CD4-positive, alpha-beta T cell (primary cell): ENCODE measurements at regions of chr2 and their contacts with region 1.

Region 1: GRCh38 chr2:38377050-38377828 is at the start of gene ATL2:
- DNase-seq: peak; percentile 87 to 97 (median 91)
- ATAC-seq: peak; percentile 75
- H3K4me3 ChIP-seq: peak within 1 kb of the TSS; percentile 75
- H3K4me3 Mint-ChIP-seq: peak within 1 kb of the TSS; percentile 99
- H3K27ac ChIP-seq: peak within 1 kb of the TSS; percentile 59 to 75
- H3K27ac Mint-ChIP-seq: peak within 1 kb of the TSS; percentile 95
- H3K4me1 ChIP-seq: peaks cover 38% of the 10 kb centered on the region
- H3K4me1 Mint-ChIP-seq: peaks cover 83% of the 10 kb centered on the region
- H3K27me3 ChIP-seq: no peaks in the 10 kb centered on the region
- H3K27me3 Mint-ChIP-seq: no peaks in the 10 kb centered on the region
- CTCF ChIP-seq: no peak
- total RNA-seq, gene ATL2: 85.5 to 91.7 TPM

Region 2: DNA sequence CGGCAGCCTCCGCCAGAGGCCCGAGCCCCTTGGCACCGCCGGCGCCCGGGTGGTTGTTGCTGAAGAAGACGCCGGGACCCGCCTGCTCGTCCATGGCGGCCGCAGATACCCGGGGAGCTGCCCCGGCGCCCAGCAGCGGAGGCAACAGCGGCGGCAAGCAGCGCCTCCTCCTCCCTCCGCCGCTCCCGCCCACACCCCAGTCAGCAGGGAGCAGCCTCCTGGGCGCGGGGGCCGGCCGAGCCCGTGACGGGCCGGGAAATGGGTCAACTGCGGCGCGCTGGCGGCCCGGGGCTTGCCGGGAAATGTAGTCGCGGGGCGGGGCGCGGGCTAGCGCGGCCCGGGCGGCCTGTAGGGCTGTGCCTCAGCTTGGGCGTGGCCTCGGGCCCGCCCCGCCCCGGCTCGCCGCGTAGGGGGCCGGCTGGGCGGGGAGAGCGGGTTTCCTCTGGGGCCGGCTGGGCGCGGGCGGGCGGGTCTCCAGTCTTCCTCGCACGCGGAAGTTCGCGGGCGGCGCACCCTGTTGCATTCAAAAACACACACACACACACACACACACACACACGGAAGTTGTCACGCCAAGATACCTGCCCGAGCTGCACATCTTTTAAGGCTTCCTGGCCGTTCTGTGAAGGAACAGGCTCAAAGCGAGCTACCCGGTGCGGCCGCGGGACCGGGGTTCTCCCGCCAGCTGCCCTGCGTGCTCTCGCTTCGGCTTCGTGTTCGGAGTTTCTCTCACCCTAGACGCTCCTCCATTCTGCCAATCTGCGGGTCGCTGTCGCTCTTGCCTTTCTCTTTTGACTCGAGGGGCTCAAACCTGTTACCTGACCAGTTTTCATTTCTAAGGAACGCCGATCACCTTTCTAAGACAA is 1410.6 kb before region 1 on chr2 and contains the start of gene STRN:
- CTCF ChIA-PET with region 1: no interaction called
- POLR2A ChIA-PET with region 1: interaction called, 4 read pairs
- intact Hi-C with region 1: loop called in 1 of 2 experiments (anchors 10 kb)
- DNase-seq: peak; percentile 93 to 99 (median 98)
- ATAC-seq: peak; percentile 88
- H3K4me3 ChIP-seq: peak within 1 kb of the TSS; percentile 86
- H3K4me3 Mint-ChIP-seq: peak within 1 kb of the TSS; percentile 99
- H3K27ac ChIP-seq: peak within 1 kb of the TSS; percentile 89 to 90
- H3K27ac Mint-ChIP-seq: peak within 1 kb of the TSS; percentile 97
- H3K4me1 ChIP-seq: peaks cover 26% of the 10 kb centered on the region
- H3K4me1 Mint-ChIP-seq: peaks cover 58% of the 10 kb centered on the region
- H3K27me3 ChIP-seq: no peaks in the 10 kb centered on the region
- H3K27me3 Mint-ChIP-seq: no peaks in the 10 kb centered on the region
- CTCF ChIP-seq: no peak
- total RNA-seq, gene STRN: 20.4 to 20.8 TPM

Region 3: DNA sequence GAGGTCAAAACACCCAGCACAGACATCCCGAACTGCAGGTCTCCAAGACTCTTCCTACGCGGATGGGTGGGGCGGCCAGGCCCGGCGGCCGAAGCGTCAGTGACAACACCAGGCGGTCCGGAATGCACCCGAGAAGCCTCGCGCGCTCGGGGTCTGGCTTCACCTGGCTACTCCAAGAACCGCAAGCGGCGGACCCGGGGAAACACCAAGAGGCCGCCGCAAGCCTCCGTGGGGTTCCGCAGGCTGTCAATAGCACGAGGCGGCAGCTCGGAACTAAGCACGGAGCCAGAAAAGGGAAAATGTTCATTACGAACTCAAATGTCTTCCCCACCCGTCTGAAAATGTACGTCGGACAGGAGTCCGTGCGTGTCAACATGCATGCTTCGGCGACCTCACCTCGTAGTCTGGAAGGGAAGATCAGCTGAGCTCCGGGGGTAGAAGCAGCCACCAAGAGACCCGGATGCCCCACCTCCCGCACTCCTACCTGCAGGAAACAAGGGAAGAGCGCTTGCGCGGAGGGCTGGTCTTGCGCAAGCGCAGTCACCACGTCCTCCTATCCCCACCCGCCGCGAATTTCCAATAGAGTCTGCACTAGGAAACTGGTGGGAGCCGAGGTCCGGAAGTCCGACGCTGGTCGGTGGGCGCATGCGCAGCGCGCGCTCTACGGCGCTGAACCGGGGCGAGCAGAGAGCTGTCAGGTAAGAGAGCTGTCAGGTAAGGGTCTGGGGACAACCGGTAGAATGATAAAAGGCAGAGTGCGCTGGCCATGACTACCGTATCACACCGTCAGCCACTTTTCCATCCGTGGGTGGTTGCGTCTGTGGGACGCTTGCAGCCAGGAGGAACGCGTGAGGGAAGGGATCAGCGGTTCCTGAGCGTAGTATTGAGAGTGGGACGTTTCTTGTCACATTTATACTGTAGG is 1293.1 kb before region 1 on chr2 and contains the starts of genes GPATCH11 and HEATR5B:
- CTCF ChIA-PET with region 1: no interaction called
- POLR2A ChIA-PET with region 1: no interaction called
- intact Hi-C with region 1: loop called in 1 of 2 experiments (anchors 10 kb)
- DNase-seq: peak; percentile 80 to 98 (median 89)
- ATAC-seq: peak; percentile 84
- H3K4me3 ChIP-seq: peak within 1 kb of the TSS; percentile 94
- H3K4me3 Mint-ChIP-seq: no peak within 1 kb of the TSS
- H3K27ac ChIP-seq: peak within 1 kb of the TSS; percentile 77 to 82
- H3K27ac Mint-ChIP-seq: no peak within 1 kb of the TSS
- H3K4me1 ChIP-seq: peaks cover 42% of the 10 kb centered on the region
- H3K4me1 Mint-ChIP-seq: no peaks in the 10 kb centered on the region
- H3K27me3 ChIP-seq: no peaks in the 10 kb centered on the region
- H3K27me3 Mint-ChIP-seq: no peaks in the 10 kb centered on the region
- CTCF ChIP-seq: no peak
- total RNA-seq, gene GPATCH11: 4.0 to 4.1 TPM
- total RNA-seq, gene HEATR5B: 23.4 to 23.9 TPM

Region 4: DNA sequence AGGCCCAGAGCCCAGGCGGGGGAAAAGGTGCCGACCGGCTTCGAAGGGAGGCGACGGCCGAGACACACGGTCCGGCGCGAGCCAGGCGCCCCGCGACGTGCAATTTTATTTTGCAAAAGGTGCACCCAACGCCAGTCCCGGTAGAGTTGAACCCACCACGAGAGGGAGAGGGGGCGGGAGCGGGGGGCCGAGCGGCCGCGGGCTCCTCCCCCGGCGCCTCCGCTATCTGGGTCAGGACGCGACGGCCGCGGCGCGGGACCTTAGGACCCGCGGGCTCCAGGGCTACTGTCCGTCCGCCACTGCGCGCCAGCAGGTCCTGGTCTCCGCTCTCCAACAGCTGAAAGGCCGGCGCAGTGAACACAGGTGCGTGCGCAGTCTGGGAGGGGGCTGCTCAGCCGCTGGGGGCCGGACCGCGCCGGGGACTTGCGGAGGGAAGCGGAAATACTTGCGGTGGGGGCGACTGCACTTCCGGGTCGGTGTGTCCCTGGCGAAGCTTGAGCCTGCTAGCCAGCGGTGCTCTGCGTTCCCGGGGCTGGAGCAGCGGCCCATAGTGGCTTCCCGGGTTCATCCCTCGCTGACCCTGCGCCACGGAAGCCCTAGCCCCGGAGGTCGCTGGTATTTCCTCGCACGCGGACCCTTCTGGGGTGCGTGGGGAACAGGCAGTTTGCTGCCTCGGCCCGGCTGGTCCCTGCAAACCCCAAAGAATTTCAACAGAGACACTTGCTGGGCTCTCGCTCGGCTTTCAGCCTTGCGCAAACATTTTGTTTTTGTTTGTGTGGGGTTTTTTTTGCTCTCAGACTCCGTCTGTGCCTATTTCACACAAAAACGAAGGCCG is 452.0 kb before region 1 on chr2 and contains the start of gene RMDN2:
- CTCF ChIA-PET with region 1: no interaction called
- POLR2A ChIA-PET with region 1: interaction called, 3 read pairs
- intact Hi-C with region 1: loop called in 1 of 2 experiments (anchors 10 kb)
- DNase-seq: peak; percentile 48 to 86 (median 71)
- ATAC-seq: peak; percentile 83
- H3K4me3 ChIP-seq: peak within 1 kb of the TSS; percentile 82
- H3K4me3 Mint-ChIP-seq: peak within 1 kb of the TSS; percentile 93
- H3K27ac ChIP-seq: peak within 1 kb of the TSS; percentile 37 to 62
- H3K27ac Mint-ChIP-seq: peak within 1 kb of the TSS; percentile 79
- H3K4me1 ChIP-seq: peaks cover 6% of the 10 kb centered on the region
- H3K4me1 Mint-ChIP-seq: peaks cover 36% of the 10 kb centered on the region
- H3K27me3 ChIP-seq: no peaks in the 10 kb centered on the region
- H3K27me3 Mint-ChIP-seq: no peaks in the 10 kb centered on the region
- CTCF ChIP-seq: no peak
- total RNA-seq, gene RMDN2: 2.4 to 3.3 TPM

Region 5: DNA sequence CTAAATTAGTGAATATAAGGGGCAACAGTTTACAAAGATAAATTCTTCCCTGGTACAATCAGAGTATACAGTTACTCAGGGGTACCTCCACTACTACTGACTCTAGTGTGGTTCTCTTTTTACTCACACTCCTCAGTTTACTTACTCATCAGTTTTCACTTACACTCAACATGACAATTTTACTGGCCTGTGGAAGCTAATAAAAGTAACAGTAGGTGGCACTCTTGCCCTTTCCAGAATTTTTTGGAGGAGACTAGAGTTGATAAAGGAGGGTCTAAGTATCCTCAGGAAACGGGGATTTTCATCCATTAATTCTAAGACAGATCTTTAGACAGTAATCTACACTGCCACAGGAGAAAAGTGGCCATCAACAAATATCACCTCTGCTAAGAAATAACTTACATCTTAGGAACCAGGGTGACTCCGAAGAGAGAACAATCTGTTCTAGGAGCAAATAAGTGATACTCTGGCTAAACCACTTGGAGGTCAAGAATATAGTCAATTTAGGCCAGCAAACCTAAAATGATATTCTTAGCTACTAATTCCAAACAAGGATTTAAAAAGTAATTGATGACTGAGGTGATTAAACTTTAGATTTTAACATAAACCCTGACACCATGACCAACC is 61.4 kb before region 1 on chr2:
- CTCF ChIA-PET with region 1: interaction called, 3 read pairs
- POLR2A ChIA-PET with region 1: interaction called, 6 read pairs
- intact Hi-C with region 1: loop called (anchors 5 kb)
- DNase-seq: peak in 4 of 14 experiments; percentile 38 to 65 (median 56)
- ATAC-seq: peak; percentile 68
- H3K4me3 ChIP-seq: no peak overlapping the region
- H3K4me3 Mint-ChIP-seq: no peak overlapping the region
- H3K27ac ChIP-seq: no peak overlapping the region
- H3K27ac Mint-ChIP-seq: no peak overlapping the region
- H3K4me1 ChIP-seq: no peaks in the 10 kb centered on the region
- H3K4me1 Mint-ChIP-seq: no peaks in the 10 kb centered on the region
- H3K27me3 ChIP-seq: no peaks in the 10 kb centered on the region
- H3K27me3 Mint-ChIP-seq: no peaks in the 10 kb centered on the region
- CTCF ChIP-seq: peak; percentile 69

Region 6: DNA sequence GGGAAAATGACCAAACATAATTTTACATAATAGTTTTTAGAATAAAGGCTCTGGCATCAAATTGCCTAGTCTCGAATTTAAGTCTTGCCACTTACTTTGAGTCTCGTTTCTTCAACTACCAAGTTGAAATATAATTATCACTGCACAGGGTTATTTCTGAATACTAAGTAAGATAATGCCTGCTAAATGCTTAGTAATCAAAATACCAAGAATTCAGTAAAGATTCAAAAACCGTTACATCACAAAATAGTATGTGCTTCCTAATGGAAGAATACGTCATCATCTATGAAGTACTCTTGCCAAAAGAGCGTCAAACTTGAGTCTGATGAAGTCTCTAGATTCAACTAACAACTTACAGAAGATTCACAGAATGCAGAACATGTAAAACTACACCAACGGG is 40.6 kb before region 1 on chr2:
- CTCF ChIA-PET with region 1: interaction called, 7 read pairs
- POLR2A ChIA-PET with region 1: interaction called, 3 read pairs
- intact Hi-C with region 1: loop called in 1 of 2 experiments (anchors 5 kb)
- DNase-seq: no peak
- ATAC-seq: no peak
- H3K4me3 ChIP-seq: no peak overlapping the region
- H3K4me3 Mint-ChIP-seq: no peak overlapping the region
- H3K27ac ChIP-seq: no peak overlapping the region
- H3K27ac Mint-ChIP-seq: no peak overlapping the region
- H3K4me1 ChIP-seq: no peaks in the 10 kb centered on the region
- H3K4me1 Mint-ChIP-seq: no peaks in the 10 kb centered on the region
- H3K27me3 ChIP-seq: no peaks in the 10 kb centered on the region
- H3K27me3 Mint-ChIP-seq: no peaks in the 10 kb centered on the region
- CTCF ChIP-seq: no peak

Region 7: DNA sequence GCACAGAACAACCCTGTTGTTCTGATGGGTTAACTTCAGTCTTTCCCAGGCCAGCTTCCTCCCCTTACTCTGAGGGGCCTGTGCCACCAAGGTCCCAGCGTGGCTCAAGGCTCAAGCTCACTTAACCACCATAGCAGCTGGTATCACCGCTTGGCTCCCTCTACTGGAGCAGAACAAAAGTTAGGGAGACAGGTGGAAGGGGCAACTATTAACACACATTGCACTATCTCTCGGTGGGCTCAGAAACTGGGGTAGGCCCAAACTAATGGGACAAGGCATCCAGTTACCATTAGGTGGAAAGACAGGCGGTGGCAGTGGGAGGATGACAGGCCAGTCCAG is 88.5 kb after region 1 on chr2:
- CTCF ChIA-PET with region 1: interaction called, 4 read pairs
- POLR2A ChIA-PET with region 1: interaction called, 3 read pairs
- intact Hi-C with region 1: loop called (anchors 5 to 10 kb)
- DNase-seq: peak in 9 of 14 experiments; percentile 2 to 50 (median 14)
- ATAC-seq: peak; percentile 54
- H3K4me3 ChIP-seq: no peak overlapping the region
- H3K4me3 Mint-ChIP-seq: no peak overlapping the region
- H3K27ac ChIP-seq: no peak overlapping the region
- H3K27ac Mint-ChIP-seq: no peak overlapping the region
- H3K4me1 ChIP-seq: no peaks in the 10 kb centered on the region
- H3K4me1 Mint-ChIP-seq: no peaks in the 10 kb centered on the region
- H3K27me3 ChIP-seq: no peaks in the 10 kb centered on the region
- H3K27me3 Mint-ChIP-seq: no peaks in the 10 kb centered on the region
- CTCF ChIP-seq: peak; percentile 31

Region 8: DNA sequence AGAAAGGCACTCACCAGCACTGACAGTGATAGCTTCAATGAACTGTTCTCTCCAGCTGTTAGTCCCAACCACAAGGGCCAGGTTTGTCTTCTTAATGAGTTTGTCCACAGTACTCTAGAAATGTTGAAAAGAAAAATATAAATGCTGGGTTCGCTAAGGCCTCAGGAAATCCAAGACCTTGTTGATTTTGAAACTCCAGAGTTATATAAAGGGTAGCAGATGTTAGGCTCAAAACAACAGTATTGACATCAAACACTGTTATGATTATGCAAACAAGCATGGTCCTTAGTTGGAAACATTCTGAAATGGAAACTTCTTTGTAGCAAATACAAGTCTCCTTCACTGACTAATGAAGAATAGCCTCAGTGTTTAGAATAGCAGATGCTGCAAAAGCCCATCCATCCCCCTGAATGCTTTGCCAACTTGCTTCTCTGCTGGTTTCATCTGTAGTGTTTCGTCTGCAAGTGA is 1783.5 kb after region 1 on chr2:
- CTCF ChIA-PET with region 1: no interaction called
- POLR2A ChIA-PET with region 1: no interaction called
- intact Hi-C with region 1: no loop called
- DNase-seq: no peak
- ATAC-seq: no peak
- H3K4me3 ChIP-seq: no peak overlapping the region
- H3K4me3 Mint-ChIP-seq: no peak overlapping the region
- H3K27ac ChIP-seq: no peak overlapping the region
- H3K27ac Mint-ChIP-seq: no peak overlapping the region
- H3K4me1 ChIP-seq: no peaks in the 10 kb centered on the region
- H3K4me1 Mint-ChIP-seq: no peaks in the 10 kb centered on the region
- H3K27me3 ChIP-seq: no peaks in the 10 kb centered on the region
- H3K27me3 Mint-ChIP-seq: no peaks in the 10 kb centered on the region
- CTCF ChIP-seq: no peak